ENCODE measurements at regions of chr4 and their contacts with region 1.

Region 1: GRCh38 chr4:106809076-106809475 is 227.0 kb downstream of the DKK2 start:
- DNase-seq: no peak
- ATAC-seq: no peak
- H3K4me3 ChIP-seq: no peak overlapping the region
- H3K27ac ChIP-seq: no peak overlapping the region
- H3K4me1 ChIP-seq: no peaks in the 10 kb centered on the region
- H3K27me3 ChIP-seq: no peaks in the 10 kb centered on the region

Region 2: DNA sequence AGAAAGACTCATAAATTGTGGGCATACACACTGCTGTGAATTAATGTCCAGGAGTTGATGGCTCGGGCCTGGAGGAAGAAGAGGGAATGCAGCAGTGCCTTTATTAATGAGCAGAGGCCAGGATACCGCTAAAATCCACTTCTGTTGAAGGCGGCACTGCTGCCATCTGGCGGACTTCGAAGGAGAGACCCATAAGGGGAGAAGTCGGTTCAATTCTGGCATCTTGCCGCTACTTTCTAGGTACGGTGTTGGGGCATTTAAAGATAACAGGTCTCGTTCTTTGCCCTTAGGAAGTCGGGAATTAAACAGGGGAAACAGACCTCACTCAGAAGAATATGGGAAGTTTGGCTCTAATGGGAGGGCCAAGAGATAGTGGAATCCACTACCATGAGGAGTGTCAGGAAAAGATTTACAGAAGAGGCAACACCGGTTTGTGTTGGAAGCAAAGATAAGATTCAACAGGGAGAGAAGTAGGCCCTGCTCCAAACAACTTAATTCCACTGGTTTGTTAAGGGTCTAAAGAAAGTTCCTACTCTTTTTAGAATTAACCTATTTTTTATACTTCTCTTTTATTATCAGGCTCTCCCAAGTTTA is 306.9 kb before region 1 on chr4:
- intact Hi-C with region 1: loop called in 1 of 2 experiments (anchors 10 kb)
- DNase-seq: peak; percentile 54 to 77
- ATAC-seq: peak; percentile 54
- H3K4me3 ChIP-seq: no peak overlapping the region
- H3K27ac ChIP-seq: no peak overlapping the region
- H3K4me1 ChIP-seq: no peaks in the 10 kb centered on the region
- H3K27me3 ChIP-seq: no peaks in the 10 kb centered on the region

Region 3: DNA sequence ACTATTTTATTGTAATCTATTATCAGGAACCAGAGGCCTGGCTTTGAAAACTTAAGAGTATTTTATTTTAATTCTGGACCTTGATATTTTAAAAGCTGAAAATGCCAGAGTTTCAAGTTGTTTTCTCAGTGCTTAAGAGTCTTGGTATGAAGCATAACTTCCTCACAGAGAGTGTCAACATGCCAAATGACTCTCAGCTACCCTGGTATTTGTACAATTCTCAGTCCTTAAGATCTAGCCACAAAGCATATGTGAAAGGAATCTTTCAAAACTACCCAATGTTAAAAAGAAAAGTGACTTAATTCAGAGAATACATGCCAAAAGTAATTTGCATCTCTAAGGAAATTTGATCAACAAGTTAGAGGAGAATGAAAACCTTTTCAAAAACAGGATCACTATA is 55.2 kb after region 1 on chr4:
- intact Hi-C with region 1: no loop called
- DNase-seq: no peak
- ATAC-seq: no peak
- H3K4me3 ChIP-seq: no peak overlapping the region
- H3K27ac ChIP-seq: peak overlapping the region in 1 of 2 donors; percentile 90
- H3K4me1 ChIP-seq: peaks cover 0 to 4% of the 10 kb centered on the region in 2 donors
- H3K27me3 ChIP-seq: no peaks in the 10 kb centered on the region